ENCODE measurements at regions of chr10 and their contacts with region 1.

Region 1: GRCh38 chr10:25080880-25081581 is 64.6 kb downstream of the THNSL1 start:
- H3K4me3 ChIP-seq: no peak overlapping the region
- H3K27ac ChIP-seq: no peak overlapping the region
- H3K4me1 ChIP-seq: no peaks in the 10 kb centered on the region
- CTCF ChIP-seq: peak; percentile 70; the same call in 1 of the 2 replicates

Region 2: GRCh38 chr10:24617771-24618391 is 463.1 kb before region 1 on chr10:
- CTCF ChIA-PET with region 1: interaction called, 27 read pairs
- POLR2A ChIA-PET with region 1: no interaction called
- H3K4me3 ChIP-seq: no peak overlapping the region
- H3K27ac ChIP-seq: no peak overlapping the region
- H3K4me1 ChIP-seq: peaks cover under 1% of the 10 kb centered on the region; the same call in 1 of the 2 replicates
- CTCF ChIP-seq: peak; percentile 50; the same call in 1 of the 2 replicates

Region 3: GRCh38 chr10:24989867-24990266 is 91.2 kb before region 1 on chr10:
- CTCF ChIA-PET with region 1: interaction called, 12 read pairs
- POLR2A ChIA-PET with region 1: no interaction called
- H3K4me3 ChIP-seq: no peak overlapping the region
- H3K27ac ChIP-seq: no peak overlapping the region
- H3K4me1 ChIP-seq: no peaks in the 10 kb centered on the region
- CTCF ChIP-seq: no peak

Region 4: GRCh38 chr10:25026463-25026862 is 54.6 kb before region 1 on chr10:
- CTCF ChIA-PET with region 1: interaction called, 20 read pairs
- POLR2A ChIA-PET with region 1: no interaction called
- H3K4me3 ChIP-seq: no peak overlapping the region
- H3K27ac ChIP-seq: no peak overlapping the region
- H3K4me1 ChIP-seq: no peaks in the 10 kb centered on the region
- CTCF ChIP-seq: no peak

Region 5: DNA sequence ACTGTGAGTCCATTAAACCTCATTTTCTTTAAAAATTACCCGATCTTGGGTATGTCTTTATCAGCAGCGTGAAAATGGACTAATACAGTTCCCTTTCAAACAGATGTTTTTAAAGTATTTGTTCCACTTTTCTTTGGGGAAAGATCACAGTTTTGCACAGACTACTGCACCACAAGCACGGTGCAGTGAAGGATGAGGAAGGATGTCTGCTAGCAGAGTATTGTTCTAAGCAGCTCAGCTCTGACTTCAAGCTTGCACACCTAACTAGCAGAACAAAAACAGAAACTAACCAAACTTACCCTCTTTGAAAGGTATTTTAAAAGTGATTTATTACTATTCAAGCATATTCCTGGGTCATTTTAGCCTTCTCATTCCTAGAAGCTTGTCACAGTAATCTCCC is 44.6 kb before region 1 on chr10:
- CTCF ChIA-PET with region 1: interaction called, 10 read pairs
- POLR2A ChIA-PET with region 1: no interaction called
- H3K4me3 ChIP-seq: no peak overlapping the region
- H3K27ac ChIP-seq: no peak overlapping the region
- H3K4me1 ChIP-seq: no peaks in the 10 kb centered on the region
- CTCF ChIP-seq: no peak

Region 6: DNA sequence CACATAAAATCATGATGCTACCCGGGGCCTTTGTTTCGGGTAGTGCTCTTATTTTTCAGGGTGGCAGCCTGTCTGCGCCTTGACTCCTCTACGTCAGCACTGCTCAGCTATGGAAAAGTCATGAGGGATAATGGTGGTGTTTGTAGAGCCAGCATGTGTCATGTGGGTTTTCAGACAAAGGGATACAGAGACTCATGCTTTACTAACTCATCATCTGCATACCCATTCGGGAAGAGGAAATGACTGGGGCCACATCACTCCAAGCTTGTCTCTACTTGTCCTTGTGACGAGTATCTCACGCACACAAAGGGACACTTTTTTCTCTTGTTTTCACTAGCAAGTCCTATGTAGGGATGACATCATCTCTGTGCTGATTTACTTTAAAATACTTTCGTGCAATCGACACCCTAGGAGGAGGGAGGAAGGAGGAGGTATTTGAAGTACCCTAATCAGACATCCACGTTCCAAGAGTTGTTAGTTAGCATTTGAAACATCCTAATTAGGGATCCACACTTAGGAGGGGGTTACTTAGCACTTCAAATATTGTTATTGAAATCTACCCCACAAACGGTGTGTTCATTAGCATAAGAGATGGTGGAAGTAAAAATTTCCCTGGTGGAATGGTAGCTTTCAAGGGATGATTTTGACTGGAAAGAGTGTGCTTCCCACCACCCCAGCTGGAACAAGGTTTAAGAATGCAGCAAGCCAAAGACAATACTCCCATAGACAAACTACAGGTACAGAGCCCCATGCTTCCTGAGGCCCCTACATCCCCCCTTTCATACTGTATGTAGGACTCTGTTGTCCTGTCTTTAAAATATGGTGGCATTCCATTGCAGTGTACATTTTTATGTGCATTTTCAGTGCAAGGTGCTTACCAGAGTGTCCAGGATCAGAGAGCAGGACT is 12.6 kb before region 1 on chr10:
- CTCF ChIA-PET with region 1: interaction called, 22 read pairs
- POLR2A ChIA-PET with region 1: no interaction called
- H3K4me3 ChIP-seq: no peak overlapping the region
- H3K27ac ChIP-seq: no peak overlapping the region
- H3K4me1 ChIP-seq: no peaks in the 10 kb centered on the region
- CTCF ChIP-seq: no peak